ENCODE measurements at regions of chr15 and their contacts with region 1.

Region 1: DNA sequence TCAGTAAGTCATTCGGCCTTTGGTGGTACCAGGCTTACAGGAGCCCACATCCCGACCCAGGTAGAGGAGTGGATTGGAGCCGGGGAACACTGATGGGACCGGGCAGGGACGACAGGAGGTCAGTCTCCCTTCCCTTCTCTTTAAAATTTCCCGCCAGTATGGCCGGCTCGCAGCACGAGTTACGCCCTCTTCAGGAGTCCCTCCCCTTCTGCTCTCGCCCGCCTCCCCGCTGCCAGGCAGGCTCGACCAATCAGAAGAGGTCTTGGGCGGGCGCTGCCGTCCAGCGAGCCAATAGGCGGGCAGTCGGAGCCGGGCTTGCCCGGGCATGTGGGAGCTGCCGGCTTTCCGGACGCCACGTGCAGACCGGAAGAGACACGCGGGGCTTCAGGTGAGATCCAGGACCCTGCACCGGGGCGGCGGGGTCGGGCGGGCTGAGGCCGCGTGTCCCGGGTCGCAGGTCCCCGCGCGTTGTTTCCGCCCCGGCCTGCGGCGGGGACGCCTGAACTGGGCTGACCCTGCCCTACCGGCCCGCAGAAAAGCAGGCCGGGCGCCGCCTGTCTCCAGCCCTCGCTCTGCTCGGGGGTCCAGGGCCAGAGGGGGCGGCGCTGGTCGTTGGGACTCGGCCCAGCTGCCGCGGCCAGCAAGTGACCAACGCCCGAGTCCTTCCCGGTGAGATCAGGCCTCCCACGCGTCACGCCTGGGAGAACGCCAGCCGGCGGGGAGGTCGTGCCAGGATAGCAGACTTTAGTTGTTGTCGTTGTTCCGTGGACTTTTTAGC is at the start of gene AEN:
- DNase-seq: peak; percentile 97
- H3K4me3 Mint-ChIP-seq: peak within 1 kb of the TSS; percentile 94
- H3K27ac Mint-ChIP-seq: peak within 1 kb of the TSS; percentile 97
- H3K4me1 Mint-ChIP-seq: peaks cover 39% of the 10 kb centered on the region
- H3K27me3 Mint-ChIP-seq: no peaks in the 10 kb centered on the region
- total RNA-seq, gene AEN: 55.5 to 55.7 TPM

Region 2: GRCh38 chr15:88467073-88467934 is 153.9 kb before region 1 on chr15 and contains the starts of genes MRPL46 and MRPS11:
- CTCF ChIA-PET with region 1: interaction called, 3 read pairs
- POLR2A ChIA-PET with region 1: interaction called, 7 read pairs
- intact Hi-C with region 1: loop called (anchors 1 kb)
- DNase-seq: peak; percentile 91
- H3K4me3 Mint-ChIP-seq: peak within 1 kb of the TSS; percentile 93
- H3K27ac Mint-ChIP-seq: peak within 1 kb of the TSS; percentile 98
- H3K4me1 Mint-ChIP-seq: peaks cover 39% of the 10 kb centered on the region
- H3K27me3 Mint-ChIP-seq: no peaks in the 10 kb centered on the region
- total RNA-seq, gene MRPL46: 29.6 to 34.2 TPM
- total RNA-seq, gene MRPS11: 54.9 to 56.4 TPM

Region 3: GRCh38 chr15:88538972-88539840 is 82.0 kb before region 1 on chr15:
- CTCF ChIA-PET with region 1: no interaction called
- POLR2A ChIA-PET with region 1: no interaction called
- intact Hi-C with region 1: no loop called
- DNase-seq: no peak
- H3K4me3 Mint-ChIP-seq: no peak overlapping the region
- H3K27ac Mint-ChIP-seq: no peak overlapping the region
- H3K4me1 Mint-ChIP-seq: peaks cover 1% of the 10 kb centered on the region
- H3K27me3 Mint-ChIP-seq: no peaks in the 10 kb centered on the region

Region 4: GRCh38 chr15:88638626-88639372 is 17.6 kb after region 1 on chr15 and contains the start of gene ISG20:
- CTCF ChIA-PET with region 1: interaction called, 30 read pairs
- POLR2A ChIA-PET with region 1: interaction called, 30 read pairs
- intact Hi-C with region 1: loop called (anchors 1 kb)
- DNase-seq: peak; percentile 99
- H3K4me3 Mint-ChIP-seq: peak within 1 kb of the TSS; percentile 82
- H3K27ac Mint-ChIP-seq: peak within 1 kb of the TSS; percentile 99
- H3K4me1 Mint-ChIP-seq: peaks cover 74% of the 10 kb centered on the region
- H3K27me3 Mint-ChIP-seq: no peaks in the 10 kb centered on the region
- total RNA-seq, gene ISG20: 68.2 to 74.5 TPM

Region 5: DNA sequence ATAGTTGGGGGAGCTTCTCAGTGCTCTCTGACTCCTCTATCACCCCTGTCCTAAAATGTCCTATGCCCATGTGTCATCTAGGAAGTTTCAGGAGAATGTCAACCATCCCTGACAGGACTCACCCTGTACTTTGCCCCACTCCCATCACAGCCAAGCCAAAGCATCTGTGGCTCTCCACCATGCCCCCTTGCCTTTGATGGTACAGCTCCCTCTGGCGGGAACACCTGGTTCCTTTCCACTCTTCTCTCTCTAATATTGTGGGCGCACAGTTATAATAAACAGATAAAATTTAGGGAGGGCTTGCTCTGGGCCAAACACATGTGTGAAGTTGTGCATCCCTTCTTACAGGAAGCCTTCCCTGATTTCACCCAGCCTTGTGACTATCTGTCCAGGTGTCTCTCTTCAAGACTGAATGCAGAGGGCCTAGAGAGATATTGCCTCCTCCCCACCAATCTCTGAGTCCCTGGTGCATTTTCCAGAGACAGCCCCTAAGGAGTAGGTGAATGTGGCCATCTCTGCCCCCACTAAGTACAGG is 80.4 kb after region 1 on chr15:
- CTCF ChIA-PET with region 1: interaction called, 7 read pairs
- POLR2A ChIA-PET with region 1: no interaction called
- intact Hi-C with region 1: loop called (anchors 2 kb)
- DNase-seq: peak; percentile 50
- H3K4me3 Mint-ChIP-seq: no peak overlapping the region
- H3K27ac Mint-ChIP-seq: no peak overlapping the region
- H3K4me1 Mint-ChIP-seq: peaks cover 11% of the 10 kb centered on the region
- H3K27me3 Mint-ChIP-seq: peaks cover 15% of the 10 kb centered on the region

Region 6: DNA sequence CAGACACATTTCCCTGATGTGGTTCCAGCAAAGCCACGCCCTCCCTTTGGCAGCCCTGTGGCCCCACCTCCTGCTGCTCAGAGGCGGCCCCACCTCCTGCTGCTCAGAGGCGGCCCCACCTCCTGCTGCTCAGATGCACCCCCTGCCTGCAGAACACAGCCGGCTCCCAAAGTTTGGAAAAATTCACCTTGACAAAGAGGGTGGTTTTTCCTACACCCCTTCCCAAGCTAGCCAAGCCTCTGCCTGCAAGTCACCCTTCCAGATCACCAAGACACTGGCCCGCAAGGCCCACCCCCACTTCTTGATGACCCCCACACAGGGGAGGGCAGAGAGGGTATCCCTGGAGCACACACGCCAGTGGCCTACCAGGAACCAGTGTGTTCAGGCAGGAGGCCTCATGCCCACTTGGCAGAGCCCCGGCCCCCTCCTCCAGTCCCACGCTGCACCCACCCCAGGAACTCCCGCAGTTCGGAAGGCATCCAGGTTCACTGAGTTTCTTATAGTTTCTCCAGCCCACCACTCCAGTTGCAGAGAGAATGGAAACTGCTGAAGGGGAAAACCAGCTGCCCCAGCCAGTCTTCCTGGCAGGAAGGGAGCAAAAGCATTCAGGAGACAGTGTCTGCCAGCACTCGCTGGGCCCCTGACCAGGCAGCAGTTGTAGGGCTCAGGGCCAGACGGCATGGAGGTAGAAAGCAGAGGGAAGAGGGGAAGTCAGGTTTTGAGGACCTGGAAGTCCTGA is 276.4 kb after region 1 on chr15:
- CTCF ChIA-PET with region 1: interaction called, 6 read pairs
- POLR2A ChIA-PET with region 1: interaction called, 3 read pairs
- intact Hi-C with region 1: loop called (anchors 2 kb)
- DNase-seq: peak; percentile 78
- H3K4me3 Mint-ChIP-seq: no peak overlapping the region
- H3K27ac Mint-ChIP-seq: no peak overlapping the region
- H3K4me1 Mint-ChIP-seq: peaks cover 41% of the 10 kb centered on the region
- H3K27me3 Mint-ChIP-seq: no peaks in the 10 kb centered on the region

Region 7: GRCh38 chr15:89171136-89172072 is 550.2 kb after region 1 on chr15:
- CTCF ChIA-PET with region 1: no interaction called
- POLR2A ChIA-PET with region 1: no interaction called
- intact Hi-C with region 1: loop called (anchors 10 kb)
- DNase-seq: peak; percentile 53
- H3K4me3 Mint-ChIP-seq: no peak overlapping the region
- H3K27ac Mint-ChIP-seq: no peak overlapping the region
- H3K4me1 Mint-ChIP-seq: peaks cover 24% of the 10 kb centered on the region
- H3K27me3 Mint-ChIP-seq: no peaks in the 10 kb centered on the region